Prostate gland (tissue), 2 donors: ENCODE measurements at regions of chr6 and their contacts with region 1.

Region 1: DNA sequence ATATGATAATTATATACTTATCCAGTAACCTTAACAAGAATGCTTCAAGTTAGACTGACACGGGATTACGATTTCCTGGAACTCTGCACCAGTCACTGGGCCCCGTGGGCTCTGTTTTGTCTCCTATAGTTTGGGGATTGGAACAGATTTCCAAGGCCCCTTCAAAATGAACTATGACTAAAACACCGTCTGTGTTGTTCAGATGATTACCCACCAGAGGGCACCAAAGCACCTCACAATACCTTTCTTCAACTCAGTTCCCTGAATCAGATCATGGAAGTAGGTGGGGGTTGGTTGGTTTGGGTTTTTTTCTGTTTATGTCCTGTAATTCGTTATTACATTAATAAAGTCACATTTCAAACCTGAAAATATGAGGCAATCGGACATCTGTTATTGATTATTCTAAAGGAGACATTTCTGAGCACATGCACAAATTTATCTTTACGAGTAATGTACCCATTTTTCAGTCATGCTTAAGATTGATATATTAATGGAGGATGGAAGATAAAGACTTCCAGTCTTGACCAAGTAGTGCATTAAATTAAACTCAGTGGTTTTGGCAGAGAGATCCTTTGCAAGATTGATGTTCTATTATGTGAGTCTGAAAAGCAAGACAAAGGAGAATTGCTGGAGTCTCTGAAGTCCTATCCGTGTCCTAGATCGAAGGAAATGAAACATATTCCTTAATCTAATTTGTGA is 112.0 kb upstream of the COL21A1 start:
- DNase-seq: peak; percentile 61
- H3K4me3 ChIP-seq: no peak overlapping the region
- H3K27ac ChIP-seq: no peak overlapping the region
- H3K4me1 ChIP-seq: no peaks in the 10 kb centered on the region
- H3K27me3 ChIP-seq: no peaks in the 10 kb centered on the region
- CTCF ChIP-seq: peak; percentile 40 to 88 (median 81)
- POLR2A ChIP-seq: no peak

Region 2: DNA sequence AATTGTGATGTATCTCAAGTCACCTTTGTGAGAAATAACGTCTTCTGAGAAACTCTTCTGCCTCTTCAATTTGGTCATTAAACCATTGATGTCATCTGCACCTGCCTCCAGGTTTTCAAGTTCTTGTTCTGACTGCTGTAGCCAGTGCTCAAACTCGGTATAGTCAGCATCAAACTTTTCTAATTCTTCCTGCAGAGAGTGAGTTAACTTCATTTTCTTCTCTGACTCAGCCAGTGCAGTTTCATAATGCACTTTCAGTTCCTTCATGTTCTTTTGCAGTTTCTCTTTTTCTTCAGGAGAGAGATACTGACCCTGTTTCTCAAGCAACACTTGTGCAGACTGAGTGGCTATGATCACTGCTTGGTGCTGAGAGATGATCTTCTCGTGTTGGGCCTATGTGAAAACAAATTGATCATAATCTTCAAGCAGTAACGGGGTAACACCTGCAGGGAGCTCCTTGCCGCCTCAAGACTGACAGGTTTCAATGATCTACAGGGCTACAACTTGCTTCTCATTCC is 234.5 kb after region 1 on chr6:
- intact Hi-C with region 1: loop called (anchors 2 kb)
- DNase-seq: no peak
- H3K4me3 ChIP-seq: no peak overlapping the region
- H3K27ac ChIP-seq: no peak overlapping the region
- H3K4me1 ChIP-seq: no peaks in the 10 kb centered on the region
- H3K27me3 ChIP-seq: no peaks in the 10 kb centered on the region
- CTCF ChIP-seq: no peak
- POLR2A ChIP-seq: no peak

Region 3: GRCh38 chr6:56699066-56699654 is 339.8 kb after region 1 on chr6:
- intact Hi-C with region 1: loop called (anchors 10 kb)
- DNase-seq: no peak
- H3K4me3 ChIP-seq: no peak overlapping the region
- H3K27ac ChIP-seq: no peak overlapping the region
- H3K4me1 ChIP-seq: no peaks in the 10 kb centered on the region
- H3K27me3 ChIP-seq: no peaks in the 10 kb centered on the region
- CTCF ChIP-seq: peak in 3 of 4 experiments; percentile 60 to 74 (median 69)
- POLR2A ChIP-seq: no peak

Region 4: DNA sequence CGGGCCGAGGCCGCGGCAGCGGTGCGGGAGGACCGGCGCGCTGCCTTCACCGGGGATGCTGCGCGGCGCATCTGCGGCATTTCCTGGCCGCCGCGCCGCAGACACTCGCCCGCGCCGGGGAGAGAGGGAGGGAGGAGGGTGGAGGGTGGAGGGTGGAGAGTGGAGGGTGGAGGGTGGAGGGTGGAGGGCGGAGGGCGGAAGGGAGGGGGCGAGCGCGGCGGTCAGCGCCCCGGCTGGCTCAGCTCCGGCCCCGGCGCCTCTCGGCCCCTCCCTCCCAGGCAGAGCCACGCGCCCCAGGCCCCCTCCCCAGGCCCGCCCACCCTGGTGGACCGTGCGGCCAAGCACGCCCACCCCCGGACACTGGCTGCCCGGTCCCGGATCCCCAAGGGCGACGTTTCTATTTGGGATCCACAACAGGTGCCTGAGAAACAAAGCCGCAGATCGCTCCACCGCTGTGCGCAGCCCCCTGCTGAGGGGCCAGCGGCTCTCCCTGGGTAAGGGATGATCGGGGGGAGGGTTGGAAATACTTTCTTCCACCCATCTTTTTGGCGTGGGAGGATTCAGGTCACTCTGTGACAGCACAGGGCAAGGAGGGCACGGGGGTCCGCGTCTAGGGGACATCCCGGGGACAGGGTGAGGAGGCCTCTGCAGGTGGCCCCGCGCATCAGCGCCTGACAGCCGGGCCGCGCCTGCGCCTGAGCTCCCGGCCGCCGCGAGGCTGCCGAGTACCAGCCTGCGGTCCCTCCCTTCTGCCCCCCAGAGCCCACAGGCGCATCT is 484.4 kb after region 1 on chr6:
- intact Hi-C with region 1: loop called (anchors 5 kb)
- DNase-seq: peak; percentile 20
- H3K4me3 ChIP-seq: peak overlapping the region; percentile 44 to 49
- H3K27ac ChIP-seq: peak overlapping the region; percentile 50 to 70
- H3K4me1 ChIP-seq: no peaks in the 10 kb centered on the region
- H3K27me3 ChIP-seq: no peaks in the 10 kb centered on the region
- CTCF ChIP-seq: peak in 2 of 4 experiments; percentile 37 to 41
- POLR2A ChIP-seq: peak; percentile 8